Activated CD4-positive, alpha-beta T cell treated with anti-CD3 and anti-CD28 coated beads, Interleukin-2, amount 10 ng/mL, durations not matched to agents 24 days and 14 days (primary cell): ENCODE measurements at regions of chr11 and their contacts with region 1.

Region 1: GRCh38 chr11:47552566-47553416 is at the start of gene CELF1:
- DNase-seq: peak; percentile 98
- H3K4me3 Mint-ChIP-seq: peak within 1 kb of the TSS; percentile 93
- H3K27ac Mint-ChIP-seq: peak within 1 kb of the TSS; percentile 95
- H3K4me1 Mint-ChIP-seq: peaks cover 32% of the 10 kb centered on the region
- H3K27me3 Mint-ChIP-seq: no peaks in the 10 kb centered on the region
- total RNA-seq, gene CELF1: 154 and 159 TPM in 2 replicates

Region 2: DNA sequence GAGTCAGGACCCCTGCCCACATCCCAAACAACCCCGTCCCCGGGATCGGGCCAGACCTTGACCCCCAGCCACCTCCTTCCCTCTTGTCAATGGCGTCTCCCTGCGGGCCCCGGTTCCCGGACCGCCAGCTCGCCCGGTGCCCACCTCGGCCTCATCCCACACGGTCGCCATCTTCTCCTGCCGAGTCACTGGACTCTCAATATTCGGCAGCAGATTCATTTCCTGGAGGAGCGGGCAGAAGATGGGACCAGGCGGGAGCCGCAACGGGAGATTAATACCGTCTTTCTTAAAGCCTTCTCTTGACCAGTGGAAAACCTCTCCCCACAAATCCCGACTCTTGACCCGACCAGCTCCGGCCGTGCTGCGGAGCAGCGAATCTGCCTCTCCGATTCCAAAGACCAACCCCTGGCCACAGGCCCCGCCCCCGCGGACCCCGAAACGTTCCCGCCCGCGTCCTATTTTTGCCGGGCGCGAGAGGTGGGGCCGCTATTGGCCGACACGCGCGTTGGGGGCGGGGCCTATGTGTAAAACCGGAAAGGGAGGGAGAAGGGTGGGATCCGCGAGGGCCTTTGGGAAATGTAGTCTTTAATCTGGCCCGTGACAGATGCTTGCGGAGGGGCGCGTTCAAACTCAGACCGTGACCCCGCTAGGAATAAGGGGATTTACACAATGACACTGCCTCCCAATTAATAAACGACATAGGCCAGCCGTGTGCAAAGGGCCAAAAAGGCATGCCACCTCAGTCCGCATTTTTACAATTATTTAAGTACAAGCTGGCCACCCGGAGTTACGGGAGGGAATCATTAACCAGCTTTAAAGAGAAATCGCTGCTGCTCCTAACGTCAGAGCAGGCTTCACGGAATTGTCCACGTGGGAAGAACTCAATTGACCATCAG is 126.5 kb before region 1 on chr11 and contains the start of gene PSMC3:
- intact Hi-C with region 1: loop called (anchors 2 kb)
- DNase-seq: peak; percentile 100
- H3K4me3 Mint-ChIP-seq: peak within 1 kb of the TSS; percentile 100
- H3K27ac Mint-ChIP-seq: peak within 1 kb of the TSS; percentile 99
- H3K4me1 Mint-ChIP-seq: peaks cover 19% of the 10 kb centered on the region
- H3K27me3 Mint-ChIP-seq: no peaks in the 10 kb centered on the region
- total RNA-seq, gene PSMC3: 230 and 234 TPM in 2 replicates

Region 3: GRCh38 chr11:47514825-47515647 is 37.8 kb before region 1 on chr11:
- intact Hi-C with region 1: loop called (anchors 2 kb)
- DNase-seq: peak; percentile 66
- H3K4me3 Mint-ChIP-seq: peak overlapping the region; percentile 60
- H3K27ac Mint-ChIP-seq: peak overlapping the region; percentile 91
- H3K4me1 Mint-ChIP-seq: peaks cover 54% of the 10 kb centered on the region
- H3K27me3 Mint-ChIP-seq: no peaks in the 10 kb centered on the region

Region 4: GRCh38 chr11:47565340-47566148 is 12.8 kb after region 1 on chr11 and contains the start of gene PTPMT1:
- intact Hi-C with region 1: loop called (anchors 1 kb)
- DNase-seq: peak; percentile 92
- H3K4me3 Mint-ChIP-seq: peak within 1 kb of the TSS; percentile 89
- H3K27ac Mint-ChIP-seq: peak within 1 kb of the TSS; percentile 87
- H3K4me1 Mint-ChIP-seq: peaks cover 16% of the 10 kb centered on the region
- H3K27me3 Mint-ChIP-seq: no peaks in the 10 kb centered on the region
- total RNA-seq, gene PTPMT1: 53.9 and 54.9 TPM in 2 replicates

Region 5: DNA sequence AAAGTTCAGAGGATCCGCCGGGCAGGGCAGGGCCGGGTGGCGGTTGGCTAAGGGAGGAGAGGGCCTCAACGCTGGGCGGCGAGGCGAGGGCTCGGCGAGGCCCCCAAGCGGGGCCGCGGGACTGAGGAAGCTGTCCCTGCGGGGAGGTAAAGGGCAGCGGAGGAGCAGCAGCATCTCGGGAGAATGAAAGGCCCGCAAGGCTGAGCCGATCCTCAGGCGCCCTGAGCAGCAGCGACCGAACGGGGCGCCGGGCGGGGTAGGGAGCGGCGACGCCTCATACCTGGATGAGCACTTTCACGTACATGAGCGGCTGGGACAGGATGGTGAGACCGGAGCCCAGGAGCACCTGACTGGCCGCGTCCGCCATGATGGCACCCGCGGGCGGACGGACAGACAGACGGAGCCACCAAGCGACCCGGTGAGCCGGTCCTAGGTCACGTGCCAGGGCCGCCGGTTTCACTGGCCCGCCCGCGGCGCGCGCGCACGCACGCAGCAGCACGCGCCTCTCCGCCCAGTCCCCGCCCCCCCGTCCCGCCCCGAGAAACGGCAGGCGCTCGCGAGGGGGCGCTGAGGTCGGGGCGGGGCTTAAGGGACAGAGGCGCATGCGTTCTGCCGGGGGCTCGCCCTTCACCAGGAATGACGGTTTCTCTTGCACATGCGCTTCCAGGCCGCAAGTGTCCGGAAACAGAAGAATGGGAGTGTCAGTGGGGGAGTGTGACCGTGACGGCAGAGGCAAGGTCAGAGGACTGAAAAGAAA is 89.5 kb after region 1 on chr11 and contains the start of gene MTCH2:
- intact Hi-C with region 1: loop called (anchors 2 kb)
- DNase-seq: peak; percentile 99
- H3K4me3 Mint-ChIP-seq: peak within 1 kb of the TSS; percentile 98
- H3K27ac Mint-ChIP-seq: peak within 1 kb of the TSS; percentile 98
- H3K4me1 Mint-ChIP-seq: peaks cover 15% of the 10 kb centered on the region
- H3K27me3 Mint-ChIP-seq: no peaks in the 10 kb centered on the region
- total RNA-seq, gene MTCH2: 128 and 136 TPM in 2 replicates

Region 6: GRCh38 chr11:47899801-47900200 is 347.0 kb after region 1 on chr11:
- intact Hi-C with region 1: no loop called
- DNase-seq: no peak
- H3K4me3 Mint-ChIP-seq: no peak overlapping the region
- H3K27ac Mint-ChIP-seq: no peak overlapping the region
- H3K4me1 Mint-ChIP-seq: peaks cover 4% of the 10 kb centered on the region
- H3K27me3 Mint-ChIP-seq: peaks cover 10% of the 10 kb centered on the region